ENCODE measurements at regions of chr7 and their contacts with region 1.

Region 1: GRCh38 chr7:27576360-27576944 is 86.2 kb downstream of the HIBADH start:
- DNase-seq: no peak
- ATAC-seq: peak in 1 of 8 donors; percentile 65
- H3K4me3 ChIP-seq: no peak overlapping the region
- H3K27ac ChIP-seq: no peak overlapping the region
- H3K4me1 ChIP-seq: no peaks in the 10 kb centered on the region
- H3K27me3 ChIP-seq: no peaks in the 10 kb centered on the region
- CTCF ChIP-seq: peak; percentile 22 to 80 (median 70)

Region 2: DNA sequence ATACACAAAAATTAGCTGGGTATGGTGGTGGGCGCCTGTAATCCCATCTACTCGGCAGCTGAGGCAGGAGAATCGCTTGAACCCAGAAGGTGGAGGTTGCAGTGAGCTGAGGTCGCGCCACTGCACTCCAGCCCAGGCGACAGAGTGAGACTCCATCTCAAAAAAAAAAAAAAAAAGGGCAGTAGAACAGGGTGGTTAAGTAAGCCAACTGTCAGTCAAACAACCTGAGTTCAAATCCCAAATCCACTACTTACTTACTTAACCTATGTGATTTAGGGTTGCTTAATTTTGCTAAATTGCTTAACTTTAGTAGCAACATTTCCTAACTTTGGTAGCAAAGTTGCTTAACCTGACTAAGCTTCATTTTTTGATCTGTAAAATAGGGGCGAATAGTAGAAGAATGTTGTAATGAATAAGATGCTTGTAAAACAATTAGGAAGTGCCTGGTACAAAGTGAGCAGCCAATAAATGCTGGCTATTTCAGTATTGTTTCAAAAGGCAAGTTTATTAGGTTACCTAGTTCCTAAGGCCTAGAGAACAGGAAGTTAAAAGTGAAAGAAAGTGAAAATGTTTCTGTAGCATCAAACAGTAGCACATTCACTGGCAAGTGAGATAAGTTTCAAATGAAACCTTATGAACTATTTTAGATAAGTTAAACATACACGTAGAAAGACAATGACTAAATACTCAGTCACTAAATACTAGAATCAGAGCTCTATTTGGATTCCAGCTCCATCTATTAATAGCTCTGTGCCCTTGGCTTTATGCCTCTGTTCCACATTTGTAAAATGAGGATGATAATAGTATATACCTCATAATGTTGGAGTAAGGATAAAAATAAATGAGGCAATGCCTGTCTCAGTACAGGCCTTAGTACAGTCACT is 544.9 kb before region 1 on chr7:
- intact Hi-C with region 1: no loop called
- DNase-seq: peak in 1 of 2 donors; percentile 8
- ATAC-seq: peak in 7 of 8 donors; percentile 70 to 95 (median 86)
- H3K4me3 ChIP-seq: no peak overlapping the region
- H3K27ac ChIP-seq: peak overlapping the region in 4 of 10 donors; percentile 40 to 60 (median 42)
- H3K4me1 ChIP-seq: peaks cover 0 to 16% (median 8%) of the 10 kb centered on the region in 9 donors
- H3K27me3 ChIP-seq: peaks cover 0 to 9% (median 0%) of the 10 kb centered on the region in 7 donors
- CTCF ChIP-seq: no peak

Region 3: DNA sequence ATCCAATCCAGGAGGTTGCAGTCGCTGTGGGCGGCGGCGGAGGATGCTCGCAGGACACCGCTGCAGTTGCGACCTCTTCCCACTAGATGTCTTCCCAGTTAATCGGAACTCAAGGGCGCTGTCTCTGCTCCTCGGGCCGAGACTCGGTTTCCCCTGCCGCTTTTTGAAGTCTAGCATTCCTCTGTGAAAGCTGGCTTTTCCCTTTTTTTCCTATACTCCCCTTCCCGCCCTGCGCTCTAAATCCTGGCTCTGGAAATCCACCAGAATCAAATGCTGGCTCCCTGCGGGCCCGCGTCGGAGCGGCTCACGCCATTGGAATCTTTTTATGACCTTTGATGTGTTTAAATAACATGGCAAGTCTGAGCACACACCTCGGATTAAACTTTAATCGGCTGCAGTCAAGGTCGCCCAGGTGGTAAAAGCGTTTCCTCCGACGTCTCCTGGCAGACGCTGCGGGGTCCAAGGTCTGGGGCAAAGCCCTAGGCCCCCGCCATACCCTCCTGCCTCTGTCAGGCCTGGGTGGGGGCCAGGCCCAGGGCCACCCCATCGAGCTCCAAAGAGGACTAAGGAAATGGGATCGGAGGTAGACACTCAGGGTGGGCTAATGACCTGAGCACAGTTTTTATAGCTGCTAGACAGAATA is 365.9 kb before region 1 on chr7:
- intact Hi-C with region 1: loop called in 5 of 10 experiments (anchors 5 to 10 kb)
- DNase-seq: peak in 1 of 2 donors; percentile 44
- ATAC-seq: peak in 7 of 8 donors; percentile 51 to 75 (median 65)
- H3K4me3 ChIP-seq: peak overlapping the region in 7 of 10 donors; percentile 14 to 37 (median 21)
- H3K27ac ChIP-seq: no peak overlapping the region
- H3K4me1 ChIP-seq: peaks cover 3 to 27% (median 16%) of the 10 kb centered on the region in 9 donors
- H3K27me3 ChIP-seq: peaks cover 23 to 100% (median 99%) of the 10 kb centered on the region in 7 donors
- CTCF ChIP-seq: peak; percentile 54 to 79 (median 73)

Region 4: GRCh38 chr7:27224983-27225934 is 351.2 kb before region 1 on chr7:
- intact Hi-C with region 1: loop called in 2 of 10 experiments (anchors 10 kb)
- DNase-seq: no peak
- ATAC-seq: peak in 1 of 8 donors; percentile 53
- H3K4me3 ChIP-seq: no peak overlapping the region
- H3K27ac ChIP-seq: no peak overlapping the region
- H3K4me1 ChIP-seq: peaks cover 0 to 11% (median 4%) of the 10 kb centered on the region in 9 donors
- H3K27me3 ChIP-seq: peaks cover 28 to 97% (median 89%) of the 10 kb centered on the region in 7 donors
- CTCF ChIP-seq: no peak

Region 5: DNA sequence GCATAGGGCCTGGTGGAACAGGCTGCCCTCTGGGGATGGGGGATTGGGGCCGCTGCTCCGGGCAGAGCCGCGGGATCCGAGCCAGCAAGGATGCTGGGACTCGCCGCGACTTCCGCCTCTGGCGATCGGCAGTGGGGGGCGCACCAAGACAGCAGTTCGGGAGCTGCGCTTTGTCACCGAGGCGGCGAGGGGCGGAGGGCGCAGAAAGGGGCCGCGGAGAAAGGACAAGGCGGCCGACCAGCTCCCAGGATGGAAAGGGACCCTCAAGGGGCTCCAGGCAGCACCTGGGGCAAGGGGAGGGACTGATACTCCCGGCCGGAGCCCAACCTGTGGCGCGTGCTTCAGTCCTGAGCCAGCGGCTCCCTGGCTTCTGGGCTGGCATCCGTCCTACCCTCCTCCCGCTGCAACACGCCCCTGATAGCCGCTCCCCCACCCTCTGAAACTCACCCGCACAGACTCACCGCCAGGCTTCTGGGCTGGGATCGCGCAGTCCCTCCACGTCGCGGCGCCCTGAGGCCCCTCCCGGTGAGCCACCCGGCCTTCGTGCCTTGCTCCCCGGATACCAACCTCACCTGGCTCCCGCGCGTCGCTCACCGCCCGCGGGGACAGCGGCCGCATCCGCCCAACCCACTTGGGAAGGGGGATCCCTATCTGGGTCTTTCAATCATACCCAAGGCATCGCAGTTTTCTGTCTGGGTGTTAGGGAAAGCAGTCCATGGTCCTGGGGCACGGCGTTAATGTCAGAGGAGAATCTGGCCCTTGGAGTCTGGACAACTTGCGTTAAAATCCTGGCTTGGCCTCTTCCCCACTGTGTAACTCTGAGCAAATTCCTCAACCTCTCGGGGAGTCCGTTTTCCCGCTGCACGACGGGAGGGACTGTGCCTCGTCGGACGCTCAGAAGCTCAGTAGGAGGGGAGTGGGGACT is 340.8 kb before region 1 on chr7:
- intact Hi-C with region 1: loop called in 2 of 10 experiments (anchors 5 to 10 kb)
- DNase-seq: peak in 1 of 2 donors; percentile 41
- ATAC-seq: peak in 6 of 8 donors; percentile 35 to 68 (median 52)
- H3K4me3 ChIP-seq: peak overlapping the region; percentile 10 to 53 (median 42)
- H3K27ac ChIP-seq: no peak overlapping the region
- H3K4me1 ChIP-seq: peaks cover 0 to 23% (median 18%) of the 10 kb centered on the region in 9 donors
- H3K27me3 ChIP-seq: peaks cover 13 to 99% (median 89%) of the 10 kb centered on the region in 7 donors
- CTCF ChIP-seq: peak in 7 of 9 donors; percentile 21 to 56 (median 49)

Region 6: DNA sequence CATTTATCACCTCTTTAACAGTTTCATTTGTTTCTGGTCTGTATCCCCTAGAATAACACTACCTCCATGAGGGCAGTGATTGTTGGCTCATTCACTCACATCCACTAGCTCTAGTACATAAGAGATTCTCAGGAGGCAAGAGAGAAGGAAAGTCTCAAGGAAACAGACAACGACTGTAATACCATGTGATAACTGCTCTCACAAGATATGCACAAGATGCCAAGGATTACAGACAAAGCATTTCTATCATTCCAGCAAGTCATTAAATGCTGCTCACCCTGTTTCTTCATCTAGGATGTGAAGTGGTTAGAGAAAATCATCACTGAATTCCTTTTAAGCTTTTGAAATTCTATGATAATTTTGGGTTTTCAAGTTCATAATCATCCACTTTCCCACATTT is 29.1 kb before region 1 on chr7:
- intact Hi-C with region 1: no loop called
- DNase-seq: no peak
- ATAC-seq: no peak
- H3K4me3 ChIP-seq: no peak overlapping the region
- H3K27ac ChIP-seq: no peak overlapping the region
- H3K4me1 ChIP-seq: no peaks in the 10 kb centered on the region
- H3K27me3 ChIP-seq: no peaks in the 10 kb centered on the region
- CTCF ChIP-seq: no peak

Region 7: GRCh38 chr7:28102778-28103177 is 526.3 kb after region 1 on chr7:
- intact Hi-C with region 1: no loop called
- DNase-seq: no peak
- ATAC-seq: peak; percentile 22 to 81 (median 34)
- H3K4me3 ChIP-seq: no peak overlapping the region
- H3K27ac ChIP-seq: peak overlapping the region; percentile 37 to 93 (median 69)
- H3K4me1 ChIP-seq: peaks cover under 1 to 63% (median 52%) of the 10 kb centered on the region in 9 donors
- H3K27me3 ChIP-seq: no peaks in the 10 kb centered on the region
- CTCF ChIP-seq: no peak